Activated B cell treated with CpG ODN at 0.5 μM for 24 hours (primary cell): ENCODE measurements at regions of chr6 and their contacts with region 1.

Region 1: DNA sequence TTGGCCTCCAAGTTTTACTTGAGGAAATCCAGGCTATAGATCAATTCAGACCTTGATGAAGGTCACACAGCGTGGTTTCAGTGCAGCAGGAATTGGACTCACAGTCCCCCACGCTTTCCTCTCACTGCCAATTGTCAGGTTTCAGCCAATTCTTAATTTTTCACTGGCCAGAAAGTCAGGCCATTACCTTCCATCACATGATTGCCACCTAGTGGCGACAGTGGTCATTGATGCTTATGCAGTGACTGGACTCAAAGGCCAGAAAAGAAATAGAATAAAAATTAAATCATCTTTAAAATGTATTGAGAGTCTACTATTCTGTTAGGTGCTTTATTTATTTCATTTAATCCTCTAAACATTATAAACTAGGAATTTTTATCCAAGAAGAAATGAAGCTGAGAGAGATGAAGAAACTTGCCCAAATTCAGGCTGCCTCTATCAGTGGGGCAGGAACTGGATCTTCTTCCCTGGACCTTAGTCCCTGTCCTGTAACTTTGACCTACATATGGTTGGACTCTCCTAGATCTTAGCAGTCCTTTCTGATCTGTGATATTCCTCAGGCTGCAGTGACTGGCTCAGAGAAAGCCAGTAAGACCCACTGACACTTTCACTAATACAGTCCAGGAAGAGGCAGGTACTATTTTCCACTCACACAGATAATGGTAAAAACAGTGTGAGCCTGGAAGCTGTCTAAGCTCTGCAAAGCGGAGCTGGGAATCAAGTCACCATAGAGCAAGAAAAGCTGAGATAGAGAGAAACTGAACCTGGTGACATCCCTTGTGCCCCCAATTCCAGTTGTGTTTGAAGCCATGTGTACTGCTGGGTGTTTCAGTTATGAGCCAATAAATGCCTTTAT is 133.3 kb downstream of the ELOVL4 start:
- DNase-seq: peak; percentile 22
- ATAC-seq: peak; percentile 60
- H3K4me3 Mint-ChIP-seq: no peak overlapping the region
- H3K27ac Mint-ChIP-seq: no peak overlapping the region
- H3K4me1 Mint-ChIP-seq: no peaks in the 10 kb centered on the region
- H3K27me3 Mint-ChIP-seq: no peaks in the 10 kb centered on the region
- CTCF ChIP-seq: no peak

Region 2: GRCh38 chr6:79280756-79281155 is 533.3 kb before region 1 on chr6:
- CTCF ChIA-PET with region 1: no interaction called
- POLR2A ChIA-PET with region 1: no interaction called
- intact Hi-C with region 1: no loop called
- DNase-seq: no peak
- ATAC-seq: no peak
- H3K4me3 Mint-ChIP-seq: no peak overlapping the region
- H3K27ac Mint-ChIP-seq: no peak overlapping the region
- H3K4me1 Mint-ChIP-seq: no peaks in the 10 kb centered on the region
- H3K27me3 Mint-ChIP-seq: no peaks in the 10 kb centered on the region
- CTCF ChIP-seq: no peak

Region 3: DNA sequence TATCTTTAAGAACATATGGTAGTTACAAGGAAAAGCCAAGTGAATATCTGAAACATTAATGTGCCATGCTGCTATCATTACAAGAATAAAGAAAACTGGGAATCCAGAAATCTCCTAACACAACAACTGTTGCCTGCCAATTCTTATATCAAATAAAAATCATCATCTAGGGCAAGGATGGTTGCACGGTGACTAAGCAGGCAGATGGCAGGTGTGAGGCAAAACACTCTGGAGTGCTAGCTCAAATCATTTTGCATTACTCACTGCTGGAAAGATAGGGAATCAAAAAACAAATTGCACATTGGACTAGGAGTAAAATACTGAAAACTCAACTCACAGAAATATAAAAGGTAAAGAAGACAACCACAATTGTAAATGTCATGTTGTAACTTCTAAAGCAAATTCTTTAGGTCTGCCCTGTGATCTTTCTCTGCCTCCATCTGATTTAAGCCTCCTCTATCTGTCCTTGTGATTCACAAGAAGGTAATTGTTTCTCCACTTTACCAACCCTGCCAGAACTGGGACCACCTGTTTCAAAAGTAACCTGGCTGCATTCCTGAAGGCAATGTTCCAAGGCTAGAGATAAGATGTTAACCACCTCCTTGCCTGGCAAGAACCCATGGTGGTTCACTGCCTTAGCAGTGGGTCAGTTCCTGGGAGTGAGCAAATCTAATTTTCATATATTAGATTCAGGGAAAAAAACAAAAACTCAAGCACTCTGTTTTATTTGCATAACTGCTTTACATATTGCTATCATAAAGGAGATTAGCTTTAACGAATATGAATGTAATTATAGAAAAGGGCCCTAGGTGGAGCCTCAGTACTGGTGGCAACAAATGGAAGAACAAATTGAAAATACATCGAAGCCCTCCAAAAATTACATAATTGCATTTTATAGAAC is 243.7 kb before region 1 on chr6:
- CTCF ChIA-PET with region 1: no interaction called
- POLR2A ChIA-PET with region 1: no interaction called
- intact Hi-C with region 1: loop called (anchors 1 kb)
- DNase-seq: no peak
- ATAC-seq: no peak
- H3K4me3 Mint-ChIP-seq: no peak overlapping the region
- H3K27ac Mint-ChIP-seq: no peak overlapping the region
- H3K4me1 Mint-ChIP-seq: peaks cover 3% of the 10 kb centered on the region
- H3K27me3 Mint-ChIP-seq: peaks cover 3% of the 10 kb centered on the region
- CTCF ChIP-seq: no peak

Region 4: DNA sequence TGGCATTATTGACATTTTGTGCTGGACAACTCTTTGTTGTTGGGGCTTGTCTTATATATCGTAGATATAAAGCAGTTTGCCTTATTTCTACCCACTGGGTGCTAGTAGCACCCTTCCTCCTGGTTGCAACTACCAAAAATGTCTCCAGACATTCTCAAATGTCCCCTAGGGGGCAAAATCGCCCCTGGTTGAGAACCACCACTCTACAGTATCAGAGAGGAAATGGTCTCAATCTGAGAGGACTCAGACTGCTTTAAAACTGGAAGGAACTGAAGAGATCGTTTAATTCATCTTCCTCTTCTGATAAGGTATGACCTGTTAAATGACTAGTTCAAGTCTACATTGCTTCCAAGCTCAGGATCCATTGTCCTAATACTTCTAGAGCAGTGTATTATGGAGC is 168.1 kb before region 1 on chr6:
- CTCF ChIA-PET with region 1: no interaction called
- POLR2A ChIA-PET with region 1: no interaction called
- intact Hi-C with region 1: loop called (anchors 5 kb)
- DNase-seq: no peak
- ATAC-seq: no peak
- H3K4me3 Mint-ChIP-seq: no peak overlapping the region
- H3K27ac Mint-ChIP-seq: no peak overlapping the region
- H3K4me1 Mint-ChIP-seq: no peaks in the 10 kb centered on the region
- H3K27me3 Mint-ChIP-seq: peaks cover 3% of the 10 kb centered on the region
- CTCF ChIP-seq: no peak

Region 5: GRCh38 chr6:79789843-79790242 is 24.2 kb before region 1 on chr6:
- CTCF ChIA-PET with region 1: no interaction called
- POLR2A ChIA-PET with region 1: no interaction called
- intact Hi-C with region 1: no loop called
- DNase-seq: no peak
- ATAC-seq: no peak
- H3K4me3 Mint-ChIP-seq: no peak overlapping the region
- H3K27ac Mint-ChIP-seq: no peak overlapping the region
- H3K4me1 Mint-ChIP-seq: no peaks in the 10 kb centered on the region
- H3K27me3 Mint-ChIP-seq: peaks cover 9% of the 10 kb centered on the region
- CTCF ChIP-seq: no peak